Activated naive CD4-positive, alpha-beta T cell treated with anti-CD3 and anti-CD28 coated beads for 36 hours (primary cell): ENCODE measurements at regions of chr7 and their contacts with region 1.

Region 1: GRCh38 chr7:111083413-111083812 is 7.5 kb upstream of the LRRN3 start:
- DNase-seq: peak; percentile 70
- H3K4me3 Mint-ChIP-seq: no peak overlapping the region
- H3K27ac Mint-ChIP-seq: peak overlapping the region; percentile 76
- H3K4me1 Mint-ChIP-seq: peaks cover 72% of the 10 kb centered on the region
- H3K27me3 Mint-ChIP-seq: no peaks in the 10 kb centered on the region

Region 2: GRCh38 chr7:110595690-110596325 is 487.6 kb before region 1 on chr7:
- CTCF ChIA-PET with region 1: no interaction called
- intact Hi-C with region 1: no loop called
- DNase-seq: no peak
- H3K4me3 Mint-ChIP-seq: no peak overlapping the region
- H3K27ac Mint-ChIP-seq: no peak overlapping the region
- H3K4me1 Mint-ChIP-seq: no peaks in the 10 kb centered on the region
- H3K27me3 Mint-ChIP-seq: no peaks in the 10 kb centered on the region

Region 3: DNA sequence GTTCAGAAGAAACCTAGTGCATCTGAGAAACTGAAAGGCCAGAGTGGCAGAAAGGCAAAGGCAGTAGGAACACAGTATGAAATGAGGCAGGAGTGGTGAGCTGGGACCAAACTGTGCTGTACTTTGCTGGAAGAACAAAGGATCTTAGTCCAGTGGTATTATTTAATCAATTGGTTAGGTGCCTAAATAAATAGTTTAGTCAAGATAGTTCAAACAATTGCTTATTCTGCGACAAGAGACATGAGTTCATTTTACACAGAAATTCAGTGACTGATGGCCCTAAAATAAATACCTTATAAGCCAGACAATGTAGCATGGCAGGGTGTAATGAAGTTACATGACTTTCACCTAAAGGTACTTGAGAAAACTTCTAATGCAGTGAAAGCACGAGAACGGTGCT is 174.3 kb before region 1 on chr7:
- CTCF ChIA-PET with region 1: no interaction called
- intact Hi-C with region 1: loop called (anchors 5 kb)
- DNase-seq: no peak
- H3K4me3 Mint-ChIP-seq: no peak overlapping the region
- H3K27ac Mint-ChIP-seq: no peak overlapping the region
- H3K4me1 Mint-ChIP-seq: peaks cover 20% of the 10 kb centered on the region
- H3K27me3 Mint-ChIP-seq: no peaks in the 10 kb centered on the region

Region 4: GRCh38 chr7:111103678-111104274 is 20.4 kb after region 1 on chr7:
- CTCF ChIA-PET with region 1: interaction called, 13 read pairs
- intact Hi-C with region 1: loop called (anchors 2 kb)
- DNase-seq: peak; percentile 37
- H3K4me3 Mint-ChIP-seq: no peak overlapping the region
- H3K27ac Mint-ChIP-seq: peak overlapping the region; percentile 41
- H3K4me1 Mint-ChIP-seq: peaks cover 63% of the 10 kb centered on the region
- H3K27me3 Mint-ChIP-seq: no peaks in the 10 kb centered on the region

Region 5: GRCh38 chr7:111115966-111116365 is 32.6 kb after region 1 on chr7:
- CTCF ChIA-PET with region 1: no interaction called
- intact Hi-C with region 1: no loop called
- DNase-seq: no peak
- H3K4me3 Mint-ChIP-seq: no peak overlapping the region
- H3K27ac Mint-ChIP-seq: peak overlapping the region; percentile 15
- H3K4me1 Mint-ChIP-seq: peaks cover 37% of the 10 kb centered on the region
- H3K27me3 Mint-ChIP-seq: no peaks in the 10 kb centered on the region

Region 6: GRCh38 chr7:111138196-111138569 is 54.8 kb after region 1 on chr7:
- CTCF ChIA-PET with region 1: interaction called, 3 read pairs
- intact Hi-C with region 1: loop called (anchors 1 kb)
- DNase-seq: peak; percentile 86
- H3K4me3 Mint-ChIP-seq: peak overlapping the region; percentile 62
- H3K27ac Mint-ChIP-seq: peak overlapping the region; percentile 92
- H3K4me1 Mint-ChIP-seq: peaks cover 32% of the 10 kb centered on the region
- H3K27me3 Mint-ChIP-seq: no peaks in the 10 kb centered on the region